ENCODE measurements at regions of chr1 and their contacts with region 1.

Region 1: GRCh38 chr1:175935566-175936115 is 192.2 kb upstream of the TNR start:
- DNase-seq: no peak
- H3K4me3 ChIP-seq: no peak overlapping the region
- H3K27ac ChIP-seq: peak overlapping the region; percentile 26 to 42
- H3K4me1 ChIP-seq: peaks cover 0 to 13% of the 10 kb centered on the region in 2 donors
- H3K27me3 ChIP-seq: no peaks in the 10 kb centered on the region
- CTCF ChIP-seq: no peak

Region 2: GRCh38 chr1:174964261-174964971 is 971.2 kb before region 1 on chr1:
- intact Hi-C with region 1: no loop called
- DNase-seq: no peak
- H3K4me3 ChIP-seq: no peak overlapping the region
- H3K27ac ChIP-seq: peak overlapping the region; percentile 44 to 70
- H3K4me1 ChIP-seq: peaks cover 3 to 26% of the 10 kb centered on the region in 2 donors
- H3K27me3 ChIP-seq: no peaks in the 10 kb centered on the region
- CTCF ChIP-seq: no peak

Region 3: GRCh38 chr1:175978476-175978875 is 42.8 kb after region 1 on chr1:
- intact Hi-C with region 1: loop called (anchors 5 kb)
- DNase-seq: no peak
- H3K4me3 ChIP-seq: no peak overlapping the region
- H3K27ac ChIP-seq: peak overlapping the region in 1 of 2 donors; percentile 27
- H3K4me1 ChIP-seq: peaks cover 0 to 27% of the 10 kb centered on the region in 2 donors
- H3K27me3 ChIP-seq: no peaks in the 10 kb centered on the region
- CTCF ChIP-seq: no peak